ENCODE measurements at regions of chr19 and their contacts with region 1.

Region 1: DNA sequence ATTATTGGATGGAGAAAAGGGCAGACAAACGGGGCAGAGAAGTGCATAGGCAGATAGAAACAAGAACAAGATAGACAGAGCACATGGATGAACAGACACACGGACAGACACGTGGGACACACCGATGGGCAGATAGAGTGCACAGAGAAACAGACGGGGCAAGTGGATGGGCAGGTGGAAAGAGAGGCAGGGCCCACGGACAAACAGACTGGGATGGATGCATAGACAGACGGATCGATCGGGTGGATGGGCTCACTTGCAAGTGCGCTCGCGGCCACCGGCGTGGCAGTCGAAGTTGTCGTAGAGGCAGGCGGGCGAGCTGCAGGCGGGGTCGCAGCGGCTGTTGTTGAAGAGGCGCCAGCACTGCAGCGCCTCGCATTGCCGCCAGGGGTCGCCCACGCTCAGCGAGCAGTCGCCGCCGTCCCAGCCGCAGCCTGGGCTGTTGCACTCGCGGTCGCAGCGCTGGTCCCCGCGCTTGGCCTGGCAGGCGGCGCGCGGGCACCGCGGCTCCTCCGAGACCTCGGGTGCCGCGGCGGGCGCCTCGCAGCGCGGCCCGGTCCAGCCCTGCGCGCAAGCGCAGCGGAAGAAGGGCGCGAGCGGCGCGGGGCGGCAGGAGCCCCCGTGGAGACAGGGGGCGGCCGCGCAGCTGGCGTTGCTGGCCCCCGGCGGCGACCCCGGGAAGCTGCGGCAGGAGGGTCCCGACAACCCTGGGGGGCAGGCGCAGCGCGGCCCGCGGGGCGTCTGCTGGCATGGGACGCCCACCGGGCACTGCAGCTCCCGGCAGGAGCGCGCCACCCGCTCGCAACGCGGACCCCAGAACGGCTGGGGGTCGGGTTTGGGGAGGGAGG is 23.3 kb downstream of the NOTCH3 start:
- DNase-seq: peak; percentile 78
- H3K4me3 ChIP-seq: no peak overlapping the region
- H3K27ac ChIP-seq: no peak overlapping the region
- H3K4me1 ChIP-seq: no peaks in the 10 kb centered on the region
- CTCF ChIP-seq: peak; percentile 80

Region 2: GRCh38 chr19:15107061-15108010 is 70.2 kb before region 1 on chr19 and contains the start of gene SYDE1:
- CTCF ChIA-PET with region 1: no interaction called
- POLR2A ChIA-PET with region 1: no interaction called
- intact Hi-C with region 1: no loop called
- DNase-seq: no peak
- H3K4me3 ChIP-seq: no peak within 1 kb of the TSS
- H3K27ac ChIP-seq: no peak within 1 kb of the TSS
- H3K4me1 ChIP-seq: no peaks in the 10 kb centered on the region
- CTCF ChIP-seq: no peak
- total RNA-seq, gene SYDE1: not detected in 2 replicates

Region 3: GRCh38 chr19:15238471-15239051 is 61.1 kb after region 1 on chr19:
- CTCF ChIA-PET with region 1: no interaction called
- POLR2A ChIA-PET with region 1: no interaction called
- intact Hi-C with region 1: no loop called
- DNase-seq: no peak
- H3K4me3 ChIP-seq: no peak overlapping the region
- H3K27ac ChIP-seq: no peak overlapping the region
- H3K4me1 ChIP-seq: no peaks in the 10 kb centered on the region
- CTCF ChIP-seq: no peak

Region 4: GRCh38 chr19:15252398-15253018 is 75.0 kb after region 1 on chr19:
- CTCF ChIA-PET with region 1: no interaction called
- POLR2A ChIA-PET with region 1: no interaction called
- intact Hi-C with region 1: loop called (anchors 5 kb)
- DNase-seq: no peak
- H3K4me3 ChIP-seq: no peak overlapping the region
- H3K27ac ChIP-seq: no peak overlapping the region
- H3K4me1 ChIP-seq: no peaks in the 10 kb centered on the region
- CTCF ChIP-seq: peak; percentile 70

Measured in OCI-LY7 (cell line).